ENCODE measurements at regions of chrX and their contacts with region 1.

Region 1: GRCh38 chrX:107627838-107628661 is at the start of gene PRPS1:
- DNase-seq: peak; percentile 94
- H3K4me3 Mint-ChIP-seq: peak within 1 kb of the TSS; percentile 91
- H3K27ac Mint-ChIP-seq: peak within 1 kb of the TSS; percentile 95
- H3K4me1 Mint-ChIP-seq: peaks cover 26% of the 10 kb centered on the region
- H3K27me3 Mint-ChIP-seq: no peaks in the 10 kb centered on the region
- total RNA-seq, gene PRPS1: 195 to 196 TPM

Region 2: DNA sequence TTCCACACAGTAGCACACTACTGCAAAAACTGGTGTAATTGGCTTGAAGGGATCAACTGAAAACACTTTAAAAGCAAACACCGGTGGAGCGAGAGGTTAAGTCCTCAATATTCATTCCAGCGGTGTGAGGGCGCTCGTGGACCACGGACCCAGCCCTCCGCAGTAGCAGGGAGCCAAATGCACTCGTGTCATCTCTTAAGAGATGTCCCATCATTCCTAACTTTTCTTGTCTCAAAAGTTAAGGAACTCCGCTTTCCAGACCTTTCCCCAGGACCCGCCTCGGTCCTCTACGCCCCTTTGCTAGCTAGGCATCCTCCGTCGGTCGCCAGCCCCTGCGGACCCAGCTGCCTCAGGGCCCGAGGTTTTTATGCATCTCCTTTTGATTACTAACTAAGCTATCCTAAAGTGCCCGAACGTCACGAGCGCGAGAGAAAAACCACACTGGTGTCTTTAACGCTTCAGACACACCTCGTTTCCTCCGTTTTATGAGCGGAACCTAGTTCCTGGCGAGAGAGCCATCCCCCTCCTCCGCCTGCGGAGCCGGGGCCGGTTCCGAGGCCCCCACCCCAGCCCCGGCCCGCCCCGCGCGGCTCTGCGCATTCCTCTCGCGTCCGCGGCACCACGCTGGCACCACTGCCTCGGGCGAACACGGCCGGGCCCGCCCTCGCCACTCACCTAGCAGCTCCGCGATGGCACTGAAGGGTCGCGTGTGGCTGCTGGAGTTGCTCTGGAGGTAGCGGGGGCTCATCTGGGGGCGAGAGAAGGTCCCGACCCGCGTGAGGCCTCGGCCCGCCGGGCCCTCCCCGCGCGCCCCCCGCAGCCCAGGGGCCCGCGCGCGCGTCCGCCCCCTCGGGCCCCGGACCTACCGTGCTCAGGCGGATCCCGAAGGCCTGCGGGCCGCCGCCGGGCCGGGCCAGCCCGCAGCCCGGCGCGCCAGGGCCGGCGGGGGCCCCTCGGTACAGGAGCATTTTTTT is 628.8 kb before region 1 on chrX:
- CTCF ChIA-PET with region 1: no interaction called
- intact Hi-C with region 1: loop called (anchors 1 kb)
- DNase-seq: peak; percentile 63
- H3K4me3 Mint-ChIP-seq: peak overlapping the region; percentile 72
- H3K27ac Mint-ChIP-seq: no peak overlapping the region
- H3K4me1 Mint-ChIP-seq: peaks cover 8% of the 10 kb centered on the region
- H3K27me3 Mint-ChIP-seq: no peaks in the 10 kb centered on the region

Region 3: DNA sequence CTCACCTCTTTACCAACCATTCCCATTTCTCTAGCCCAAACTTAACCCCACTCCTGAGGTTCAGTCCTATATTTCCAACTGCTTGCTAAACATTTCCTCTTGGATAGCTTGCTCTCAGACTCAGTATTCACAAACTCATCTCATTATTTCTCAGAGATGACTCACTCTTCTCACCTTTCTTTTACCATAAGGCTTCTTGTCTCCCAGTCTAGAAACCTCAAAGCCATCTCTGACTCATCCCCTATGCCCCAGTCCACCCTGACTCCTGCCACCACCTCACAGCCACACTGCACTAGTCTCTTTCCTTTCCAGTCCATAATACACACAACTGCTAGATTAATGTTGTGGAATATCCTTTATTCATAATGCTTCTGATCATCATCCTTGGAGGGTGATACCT is 173.7 kb before region 1 on chrX:
- CTCF ChIA-PET with region 1: interaction called, 3 read pairs
- intact Hi-C with region 1: loop called (anchors 2 kb)
- DNase-seq: peak; percentile 59
- H3K4me3 Mint-ChIP-seq: no peak overlapping the region
- H3K27ac Mint-ChIP-seq: no peak overlapping the region
- H3K4me1 Mint-ChIP-seq: peaks cover 14% of the 10 kb centered on the region
- H3K27me3 Mint-ChIP-seq: peaks cover 32% of the 10 kb centered on the region

Region 4: DNA sequence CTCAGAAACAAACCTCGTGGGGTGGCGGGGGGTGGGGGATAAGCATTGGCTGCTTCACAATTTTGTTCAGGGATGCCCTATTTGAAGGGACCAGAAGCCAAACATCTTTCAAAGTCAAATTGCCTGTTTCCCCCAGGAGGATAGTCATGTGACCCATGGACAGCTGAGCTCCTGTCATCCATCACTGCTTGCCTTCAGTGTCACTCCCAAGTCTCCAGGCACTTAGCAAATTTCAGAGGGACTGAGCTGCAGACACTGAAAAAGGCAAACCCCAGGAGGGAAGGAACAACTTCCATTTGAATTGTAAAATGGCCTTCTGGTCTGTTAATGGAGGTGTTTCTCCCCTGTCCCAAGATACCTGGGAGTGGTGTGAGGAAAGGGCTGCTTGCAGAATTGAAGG is 105.1 kb before region 1 on chrX:
- CTCF ChIA-PET with region 1: no interaction called
- intact Hi-C with region 1: no loop called
- DNase-seq: no peak
- H3K4me3 Mint-ChIP-seq: no peak overlapping the region
- H3K27ac Mint-ChIP-seq: no peak overlapping the region
- H3K4me1 Mint-ChIP-seq: no peaks in the 10 kb centered on the region
- H3K27me3 Mint-ChIP-seq: peaks cover 4% of the 10 kb centered on the region

Region 5: DNA sequence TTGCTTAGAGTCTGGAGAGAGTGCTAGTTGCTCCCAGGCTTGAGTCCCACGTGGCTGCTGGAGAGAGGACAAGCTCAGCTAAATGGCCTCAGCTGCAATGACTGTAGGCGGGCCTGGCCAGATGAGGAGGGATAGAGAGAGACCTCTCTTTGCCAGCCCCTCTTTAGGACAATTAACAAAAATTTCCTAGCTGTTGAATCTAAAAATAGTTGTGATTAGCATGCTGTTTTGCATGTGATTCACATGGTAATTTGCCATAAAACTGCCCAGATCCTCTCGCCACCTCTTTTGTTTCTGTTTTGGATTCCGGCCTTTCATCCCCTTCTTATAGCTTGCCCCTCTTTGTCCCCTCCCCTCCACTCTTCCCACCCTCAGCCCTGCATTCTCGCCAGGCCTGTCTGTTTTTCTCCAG is 28.6 kb before region 1 on chrX:
- CTCF ChIA-PET with region 1: no interaction called
- intact Hi-C with region 1: no loop called
- DNase-seq: no peak
- H3K4me3 Mint-ChIP-seq: no peak overlapping the region
- H3K27ac Mint-ChIP-seq: no peak overlapping the region
- H3K4me1 Mint-ChIP-seq: no peaks in the 10 kb centered on the region
- H3K27me3 Mint-ChIP-seq: no peaks in the 10 kb centered on the region

Region 6: GRCh38 chrX:107672955-107673378 is 44.9 kb after region 1 on chrX:
- CTCF ChIA-PET with region 1: interaction called, 8 read pairs
- intact Hi-C with region 1: loop called (anchors 1 kb)
- DNase-seq: peak; percentile 81
- H3K4me3 Mint-ChIP-seq: peak overlapping the region; percentile 22
- H3K27ac Mint-ChIP-seq: peak overlapping the region; percentile 74
- H3K4me1 Mint-ChIP-seq: peaks cover 50% of the 10 kb centered on the region
- H3K27me3 Mint-ChIP-seq: no peaks in the 10 kb centered on the region

Region 7: DNA sequence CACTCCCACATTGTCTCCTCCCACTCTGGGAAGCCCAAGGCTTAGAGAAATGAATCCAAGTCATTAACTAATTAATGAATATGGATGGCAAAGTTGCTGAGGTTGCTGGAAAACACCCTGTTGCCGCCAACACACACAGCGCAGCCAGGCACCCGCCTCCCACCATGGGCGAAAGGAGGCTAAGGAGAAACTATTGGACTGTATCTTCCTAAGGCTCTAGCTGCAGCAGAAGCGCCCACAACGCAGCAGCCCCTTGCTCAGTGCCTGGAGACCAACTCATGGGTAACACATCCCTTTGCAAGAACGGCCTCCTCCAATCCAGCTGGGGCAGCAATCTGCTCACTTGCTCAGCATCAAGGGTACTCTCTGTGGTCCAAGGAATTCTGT is 113.3 kb after region 1 on chrX:
- CTCF ChIA-PET with region 1: no interaction called
- intact Hi-C with region 1: loop called (anchors 1 kb)
- DNase-seq: no peak
- H3K4me3 Mint-ChIP-seq: peak overlapping the region; percentile 77
- H3K27ac Mint-ChIP-seq: peak overlapping the region; percentile 94
- H3K4me1 Mint-ChIP-seq: peaks cover 40% of the 10 kb centered on the region
- H3K27me3 Mint-ChIP-seq: no peaks in the 10 kb centered on the region

Region 8: GRCh38 chrX:108235986-108236385 is 607.9 kb after region 1 on chrX:
- CTCF ChIA-PET with region 1: no interaction called
- intact Hi-C with region 1: no loop called
- DNase-seq: no peak
- H3K4me3 Mint-ChIP-seq: no peak overlapping the region
- H3K27ac Mint-ChIP-seq: no peak overlapping the region
- H3K4me1 Mint-ChIP-seq: no peaks in the 10 kb centered on the region
- H3K27me3 Mint-ChIP-seq: no peaks in the 10 kb centered on the region